Panc1 (cell line): ENCODE measurements at regions of chr19 and their contacts with region 1.

Region 1: GRCh38 chr19:48044561-48044960 is 682 bp upstream of the CABP5 start:
- DNase-seq: no peak
- ATAC-seq: no peak
- H3K4me3 ChIP-seq: no peak overlapping the region
- H3K27ac ChIP-seq: no peak overlapping the region
- H3K4me1 ChIP-seq: no peaks in the 10 kb centered on the region
- H3K27me3 ChIP-seq: peaks cover 3% of the 10 kb centered on the region; the same call in 1 of the 2 replicates
- CTCF ChIP-seq: no peak

Region 2: DNA sequence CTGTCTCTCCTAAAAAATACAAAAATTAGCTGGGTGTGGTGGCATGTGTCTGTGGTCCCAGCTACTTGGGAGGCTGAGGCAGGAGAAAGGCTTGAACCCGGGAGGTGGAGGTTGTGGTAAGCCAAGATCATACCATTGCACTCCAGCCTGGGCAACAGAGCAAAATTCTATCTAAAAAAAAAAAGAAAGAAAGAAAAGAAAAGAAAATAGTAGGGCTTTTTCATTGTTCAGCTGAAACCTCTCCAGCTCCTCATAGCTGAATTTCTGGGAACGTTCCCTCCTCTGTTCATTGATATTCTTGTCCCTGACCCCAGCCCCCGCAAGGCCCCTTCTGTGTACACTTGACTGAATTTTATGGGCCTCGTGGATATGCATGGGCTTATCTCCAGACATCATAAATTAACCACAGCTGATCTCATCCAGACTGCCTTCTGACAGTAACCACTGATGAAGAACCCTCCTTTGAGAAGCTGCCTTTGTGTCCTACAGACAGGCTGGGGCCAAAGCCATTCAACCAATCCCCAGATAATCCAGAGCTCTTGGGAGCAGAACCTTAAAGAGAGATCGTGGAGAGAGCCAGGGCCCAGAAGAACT is 50.3 kb before region 1 on chr19 and contains the start of gene ELSPBP1:
- CTCF ChIA-PET with region 1: no interaction called
- POLR2A ChIA-PET with region 1: interaction called, 13 read pairs
- in situ Hi-C with region 1: no loop called
- intact Hi-C with region 1: no loop called
- DNase-seq: no peak
- ATAC-seq: no peak
- H3K4me3 ChIP-seq: no peak within 1 kb of the TSS
- H3K27ac ChIP-seq: no peak within 1 kb of the TSS
- H3K4me1 ChIP-seq: no peaks in the 10 kb centered on the region
- H3K27me3 ChIP-seq: peaks cover 9% of the 10 kb centered on the region
- CTCF ChIP-seq: no peak
- total RNA-seq, gene ELSPBP1: not detected

Region 3: GRCh38 chr19:48029431-48029830 is 15.1 kb before region 1 on chr19:
- CTCF ChIA-PET with region 1: no interaction called
- POLR2A ChIA-PET with region 1: interaction called, 13 read pairs
- in situ Hi-C with region 1: no loop called
- intact Hi-C with region 1: no loop called
- DNase-seq: no peak
- ATAC-seq: no peak
- H3K4me3 ChIP-seq: no peak overlapping the region
- H3K27ac ChIP-seq: no peak overlapping the region
- H3K4me1 ChIP-seq: no peaks in the 10 kb centered on the region
- H3K27me3 ChIP-seq: no peaks in the 10 kb centered on the region; the same call in 1 of the 2 replicates
- CTCF ChIP-seq: no peak